Natural killer cell (primary cell): ENCODE measurements at regions of chr16 and their contacts with region 1.

Region 1: DNA sequence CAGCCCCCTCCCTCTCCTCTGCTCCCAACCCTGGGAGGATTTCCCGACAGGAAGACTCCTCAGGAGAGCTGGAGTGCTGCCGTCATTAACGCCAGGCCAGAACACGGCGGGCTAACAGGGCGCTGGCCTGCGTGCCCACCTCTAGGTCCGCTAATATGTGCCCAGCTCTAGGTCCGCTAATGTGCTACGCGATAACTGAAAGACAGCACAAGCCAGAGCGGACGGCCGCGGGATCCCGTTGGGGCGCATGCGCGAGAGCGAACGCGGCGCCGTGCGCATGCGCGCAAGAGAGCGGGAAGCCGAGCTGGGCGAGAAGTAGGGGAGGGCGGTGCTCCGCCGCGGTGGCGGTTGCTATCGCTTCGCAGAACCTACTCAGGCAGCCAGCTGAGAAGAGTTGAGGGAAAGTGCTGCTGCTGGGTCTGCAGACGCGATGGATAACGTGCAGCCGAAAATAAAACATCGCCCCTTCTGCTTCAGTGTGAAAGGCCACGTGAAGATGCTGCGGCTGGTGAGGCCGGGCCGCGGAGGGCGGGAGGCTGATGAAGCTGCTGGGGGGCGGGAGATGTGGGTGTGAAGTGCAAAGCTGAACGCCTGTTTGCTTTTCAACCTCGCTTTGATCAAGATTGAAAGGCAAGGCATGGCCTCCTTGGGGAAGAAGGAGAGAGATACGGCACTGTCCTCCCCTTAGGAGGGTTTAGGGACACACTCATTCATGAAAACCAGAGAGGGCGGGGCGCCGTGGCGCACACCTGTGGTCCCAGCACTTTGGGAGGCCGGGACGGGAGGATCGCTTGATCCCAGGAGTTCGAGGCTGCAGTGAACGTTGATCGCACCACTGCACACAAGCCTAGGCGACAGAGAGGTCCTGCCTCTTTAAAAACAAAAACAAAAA is at the start of gene CKLF:
- DNase-seq: peak; percentile 93 to 97
- ATAC-seq: peak; percentile 66 to 89 (median 85)
- H3K4me3 ChIP-seq: peak within 1 kb of the TSS; percentile 75
- H3K4me3 Mint-ChIP-seq: peak within 1 kb of the TSS; percentile 89
- H3K27ac ChIP-seq: peak within 1 kb of the TSS; percentile 82
- H3K27ac Mint-ChIP-seq: peak within 1 kb of the TSS; percentile 96 to 97
- H3K4me1 ChIP-seq: peaks cover 62% of the 10 kb centered on the region
- H3K4me1 Mint-ChIP-seq: peaks cover 81 to 82% of the 10 kb centered on the region in 2 donors
- H3K27me3 ChIP-seq: no peaks in the 10 kb centered on the region
- H3K27me3 Mint-ChIP-seq: peaks cover 0 to 2% of the 10 kb centered on the region in 2 donors
- CTCF ChIP-seq: no peak
- total RNA-seq, gene CKLF: 48.0 to 69.7 (median 54.6) TPM

Region 2: GRCh38 chr16:66569827-66570405 is 17.4 kb after region 1 on chr16:
- intact Hi-C with region 1: no loop called
- DNase-seq: no peak
- ATAC-seq: peak in 1 of 3 donors; percentile 42
- H3K4me3 ChIP-seq: no peak overlapping the region
- H3K4me3 Mint-ChIP-seq: no peak overlapping the region
- H3K27ac ChIP-seq: no peak overlapping the region
- H3K27ac Mint-ChIP-seq: peak overlapping the region; percentile 71 to 72
- H3K4me1 ChIP-seq: peaks cover 13% of the 10 kb centered on the region
- H3K4me1 Mint-ChIP-seq: peaks cover 18 to 36% of the 10 kb centered on the region in 2 donors
- H3K27me3 ChIP-seq: no peaks in the 10 kb centered on the region
- H3K27me3 Mint-ChIP-seq: no peaks in the 10 kb centered on the region
- CTCF ChIP-seq: no peak

Region 3: DNA sequence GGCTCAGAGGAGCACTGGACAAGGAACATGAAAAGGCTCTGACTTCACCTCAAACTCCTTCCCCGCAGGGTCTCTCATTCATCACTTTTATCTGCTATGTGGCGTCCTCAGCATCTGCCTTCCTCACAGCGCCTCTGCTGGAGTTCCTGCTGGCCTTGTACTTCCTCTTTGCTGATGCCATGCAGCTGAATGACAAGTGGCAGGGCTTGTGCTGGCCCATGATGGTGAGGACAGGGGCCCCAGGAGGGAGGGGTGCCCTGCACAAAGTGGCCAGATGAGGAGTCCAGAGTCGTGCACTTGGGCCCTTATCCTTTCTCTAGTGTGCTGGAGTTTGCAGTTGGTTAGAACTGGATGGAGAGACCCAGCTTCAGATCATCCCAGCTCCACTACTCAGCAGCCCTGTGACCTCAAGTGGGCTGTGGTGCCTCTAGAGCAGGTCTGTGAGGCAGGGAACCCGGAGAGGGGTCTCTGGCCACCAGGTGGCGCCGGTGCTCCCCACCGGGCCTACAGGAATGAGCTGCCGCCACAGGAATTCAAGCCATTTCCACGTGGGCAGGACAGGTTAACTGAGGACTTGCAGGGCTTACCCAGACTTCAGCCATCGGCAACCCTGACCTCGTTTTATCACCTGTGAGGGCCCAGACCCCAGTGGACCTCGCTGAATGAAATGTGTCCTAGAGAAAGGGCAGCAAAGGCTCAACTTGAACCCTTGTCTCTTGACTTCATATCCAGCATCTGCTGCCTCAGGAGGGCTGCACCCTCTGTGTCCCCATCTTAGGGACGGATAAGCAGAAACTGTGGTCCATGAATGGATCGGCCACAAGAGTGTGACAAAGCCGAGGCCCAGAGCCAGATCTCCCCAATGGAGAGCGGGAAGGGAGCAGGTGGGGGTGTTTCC is 56.0 kb after region 1 on chr16:
- intact Hi-C with region 1: loop called (anchors 5 kb)
- DNase-seq: peak; percentile 72 to 88
- ATAC-seq: peak; percentile 22 to 41 (median 40)
- H3K4me3 ChIP-seq: no peak overlapping the region
- H3K4me3 Mint-ChIP-seq: peak overlapping the region; percentile 53
- H3K27ac ChIP-seq: no peak overlapping the region
- H3K27ac Mint-ChIP-seq: peak overlapping the region; percentile 56 to 77
- H3K4me1 ChIP-seq: peaks cover 46% of the 10 kb centered on the region
- H3K4me1 Mint-ChIP-seq: peaks cover 21 to 35% of the 10 kb centered on the region in 2 donors
- H3K27me3 ChIP-seq: no peaks in the 10 kb centered on the region
- H3K27me3 Mint-ChIP-seq: no peaks in the 10 kb centered on the region
- CTCF ChIP-seq: peak; percentile 84

Region 4: DNA sequence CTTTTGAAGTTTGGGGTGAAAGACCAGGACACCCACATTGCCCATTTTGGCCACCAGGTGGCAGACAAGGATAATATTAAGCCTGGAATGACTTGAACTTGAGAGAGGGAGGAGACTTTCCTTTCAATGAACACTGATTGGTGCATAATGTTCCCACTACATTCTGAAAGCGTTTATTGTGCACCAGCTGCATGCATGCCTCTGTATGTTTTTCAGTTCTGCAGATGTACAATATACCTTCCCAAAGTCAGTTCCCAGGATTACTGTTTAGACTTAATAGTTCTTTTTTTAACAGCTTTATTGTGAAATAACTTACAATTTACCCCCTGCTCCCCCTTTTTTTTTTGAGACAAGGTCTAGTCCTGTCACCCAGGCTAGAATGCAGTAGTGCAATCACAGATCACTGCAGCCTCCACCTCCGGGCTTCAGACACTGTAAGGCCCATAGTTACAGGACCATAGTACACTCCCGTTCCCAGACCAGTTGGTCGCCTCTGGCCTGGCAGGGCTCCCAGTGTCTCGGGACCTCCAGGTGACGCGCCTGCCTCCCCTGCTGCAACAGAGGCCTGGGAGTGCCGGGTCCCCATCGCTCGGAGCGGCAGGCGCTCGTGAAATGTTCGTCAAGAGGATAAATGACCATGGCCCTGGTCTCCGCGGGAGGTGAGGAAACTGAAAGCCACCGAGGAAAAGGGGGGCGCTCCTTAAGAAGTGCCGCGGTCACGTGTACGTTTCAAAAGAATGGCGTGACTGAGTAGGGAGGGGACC is 395.0 kb after region 1 on chr16:
- intact Hi-C with region 1: no loop called
- DNase-seq: peak; percentile 73 to 92
- ATAC-seq: peak; percentile 88 to 94 (median 94)
- H3K4me3 ChIP-seq: peak overlapping the region; percentile 35
- H3K4me3 Mint-ChIP-seq: peak overlapping the region; percentile 89
- H3K27ac ChIP-seq: no peak overlapping the region
- H3K27ac Mint-ChIP-seq: peak overlapping the region in 1 of 2 donors; percentile 6
- H3K4me1 ChIP-seq: peaks cover 20% of the 10 kb centered on the region
- H3K4me1 Mint-ChIP-seq: peaks cover 23 to 24% of the 10 kb centered on the region in 2 donors
- H3K27me3 ChIP-seq: peaks cover 33% of the 10 kb centered on the region
- H3K27me3 Mint-ChIP-seq: peaks cover 25 to 29% of the 10 kb centered on the region in 2 donors
- CTCF ChIP-seq: peak; percentile 82